ENCODE measurements at regions of chr21 and their contacts with region 1.

Region 1: GRCh38 chr21:33817663-33818451 is 97.7 kb downstream of the ATP5PO start:
- DNase-seq: peak; percentile 47
- H3K4me3 ChIP-seq: no peak overlapping the region
- H3K27ac ChIP-seq: no peak overlapping the region
- H3K4me1 ChIP-seq: no peaks in the 10 kb centered on the region
- H3K27me3 ChIP-seq: no peaks in the 10 kb centered on the region
- CTCF ChIP-seq: no peak
- EP300 ChIP-seq: no peak
- POLR2A ChIP-seq: no peak

Region 2: DNA sequence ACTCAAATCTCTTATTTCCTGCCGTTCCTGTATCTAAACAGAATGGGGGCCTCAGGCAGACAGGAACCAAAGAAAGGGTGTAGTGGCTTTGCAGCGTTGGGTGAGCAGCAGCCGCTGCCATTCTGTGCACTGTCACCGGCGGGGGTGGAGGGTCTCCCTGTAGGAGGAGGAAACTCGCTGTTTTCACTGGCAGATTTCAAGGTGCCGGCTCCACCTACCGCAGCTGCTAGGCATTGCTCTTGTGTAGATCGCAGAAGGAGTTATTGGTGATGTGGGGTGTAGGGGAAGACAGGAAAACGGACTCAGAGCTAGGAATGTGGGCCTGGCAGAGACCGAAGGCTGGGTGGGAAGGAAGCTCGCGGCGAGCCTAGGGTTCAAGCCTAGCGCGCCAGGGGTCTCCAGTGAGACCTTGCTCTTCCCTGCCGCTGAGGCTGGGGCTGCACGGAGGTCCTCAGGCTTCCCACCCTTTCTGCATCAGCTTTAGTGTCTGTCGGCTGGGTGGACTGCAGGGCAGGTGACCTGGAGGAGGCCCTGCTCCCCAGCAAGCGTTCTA is 77.0 kb after region 1 on chr21:
- intact Hi-C with region 1: loop called (anchors 10 kb)
- DNase-seq: peak; percentile 94
- H3K4me3 ChIP-seq: peak overlapping the region; percentile 39 to 53 (median 40)
- H3K27ac ChIP-seq: no peak overlapping the region
- H3K4me1 ChIP-seq: peaks cover 7 to 28% (median 25%) of the 10 kb centered on the region in 4 donors
- H3K27me3 ChIP-seq: no peaks in the 10 kb centered on the region
- CTCF ChIP-seq: peak; percentile 61 to 70 (median 66)
- EP300 ChIP-seq: no peak
- POLR2A ChIP-seq: no peak

Measured in esophagus muscularis mucosa (tissue), 4 donors.